Activated naive CD4-positive, alpha-beta T cell treated with anti-CD3 and anti-CD28 coated beads for 36 hours (primary cell): ENCODE measurements at regions of chr3 and their contacts with region 1.

Region 1: DNA sequence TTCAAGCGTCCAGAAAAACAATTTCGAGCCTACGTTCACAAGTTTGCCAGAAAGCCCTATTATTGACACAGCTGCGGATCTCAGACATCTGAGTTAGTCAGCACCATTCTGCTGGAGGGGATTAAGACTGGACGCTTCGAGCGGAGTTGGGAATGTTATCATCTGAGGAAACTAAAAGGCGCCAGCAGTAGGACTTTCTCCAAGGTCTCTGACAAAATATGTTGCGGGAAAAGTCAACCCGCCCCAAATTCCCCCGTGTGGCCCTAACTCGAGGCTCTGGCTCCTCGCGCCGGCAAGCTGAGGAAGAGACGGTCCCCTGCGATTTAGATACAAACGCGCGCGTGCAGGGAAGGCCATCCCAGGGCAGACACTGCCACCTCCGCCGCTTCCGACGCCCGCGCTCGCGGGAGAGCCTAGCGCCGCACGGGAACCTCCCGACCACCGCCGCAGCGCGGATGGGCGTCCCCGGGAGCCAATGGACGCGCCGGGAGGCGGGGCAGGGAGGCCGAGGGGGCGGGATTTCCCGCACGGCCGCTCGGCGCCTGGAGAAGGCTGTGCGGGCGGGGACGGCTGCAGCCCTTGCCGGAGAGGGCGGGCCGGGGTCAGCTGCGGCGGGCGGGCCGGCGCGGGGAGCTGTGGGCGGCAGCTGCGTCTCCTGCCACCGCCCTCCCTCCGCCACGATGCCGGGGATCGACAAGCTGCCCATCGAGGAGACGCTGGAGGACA is at the start of gene APPL1:
- DNase-seq: peak; percentile 93
- H3K4me3 Mint-ChIP-seq: peak within 1 kb of the TSS; percentile 88
- H3K27ac Mint-ChIP-seq: peak within 1 kb of the TSS; percentile 63
- H3K4me1 Mint-ChIP-seq: peaks cover 26% of the 10 kb centered on the region
- H3K27me3 Mint-ChIP-seq: no peaks in the 10 kb centered on the region
- total RNA-seq, gene APPL1: 30.8 to 35.1 TPM

Region 2: DNA sequence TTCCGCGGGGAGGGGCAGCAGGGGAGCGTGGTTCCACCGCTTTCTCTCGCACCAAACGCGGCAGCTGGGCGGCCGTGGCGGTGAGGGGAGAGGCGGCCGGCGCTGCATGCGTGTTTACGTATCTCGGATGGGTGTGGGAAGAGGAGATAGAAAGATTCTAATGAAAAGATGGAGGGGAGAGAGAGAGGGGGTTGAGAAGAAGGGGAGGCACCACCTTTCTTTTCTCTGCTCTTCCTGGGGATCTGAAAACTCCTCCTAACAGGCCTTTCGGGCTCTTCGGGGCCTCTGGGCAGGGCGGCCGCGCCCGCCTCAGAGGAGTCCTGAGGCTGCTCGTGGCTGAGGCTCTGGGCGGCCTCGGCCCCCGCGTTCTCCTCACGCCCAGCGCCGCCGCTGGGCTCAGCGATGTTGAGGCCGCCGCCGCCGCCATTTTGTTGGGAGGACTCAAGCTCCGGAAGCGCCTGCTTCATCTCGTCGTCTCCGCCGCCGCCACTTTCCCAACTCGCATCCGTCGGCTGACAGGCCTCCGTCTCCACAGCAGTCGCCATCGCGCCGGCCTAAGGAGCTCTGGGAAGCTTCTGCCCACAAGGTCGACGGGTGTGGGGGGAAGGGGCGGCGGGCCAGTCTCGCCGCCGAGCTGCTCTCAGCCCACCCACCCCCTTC is 544.8 kb before region 1 on chr3:
- CTCF ChIA-PET with region 1: no interaction called
- intact Hi-C with region 1: loop called (anchors 5 kb)
- DNase-seq: peak; percentile 80
- H3K4me3 Mint-ChIP-seq: peak overlapping the region; percentile 98
- H3K27ac Mint-ChIP-seq: peak overlapping the region; percentile 96
- H3K4me1 Mint-ChIP-seq: peaks cover 39% of the 10 kb centered on the region
- H3K27me3 Mint-ChIP-seq: no peaks in the 10 kb centered on the region

Region 3: DNA sequence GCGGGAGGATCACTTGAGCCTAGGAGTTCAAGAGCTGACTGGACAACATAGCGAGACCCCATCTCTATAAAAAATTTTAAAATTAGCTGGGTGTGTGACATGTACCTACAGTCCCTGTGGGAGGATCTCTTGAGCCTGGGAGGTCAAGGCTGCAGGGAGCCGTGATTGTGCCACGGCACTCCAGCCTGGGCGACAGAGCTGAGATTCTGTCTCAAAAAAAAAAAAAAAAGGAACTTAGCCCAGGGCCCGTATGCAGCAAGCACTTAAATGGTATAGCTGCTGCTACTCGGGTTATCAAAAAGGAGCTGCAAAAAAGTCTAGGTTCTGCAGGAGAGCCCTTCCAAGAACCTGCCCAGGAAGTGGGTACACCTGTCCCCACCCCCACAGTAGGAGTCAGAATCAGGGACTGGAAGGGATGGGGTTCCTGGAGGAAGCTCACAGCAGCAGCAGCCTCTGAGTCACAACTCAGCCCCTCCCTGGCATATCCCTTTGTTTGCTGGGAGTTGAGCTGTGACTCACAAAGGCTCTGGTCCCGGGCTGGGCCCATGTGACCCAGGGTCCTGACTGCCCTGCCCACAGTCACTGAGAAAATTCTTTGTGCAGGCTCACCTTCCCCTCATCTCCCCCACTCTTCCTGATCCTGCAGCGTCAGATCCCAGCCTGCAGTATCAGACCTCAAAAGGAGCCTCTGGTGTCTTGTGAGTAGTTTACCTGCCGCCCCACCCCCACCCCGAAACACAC is 167.1 kb before region 1 on chr3 and contains the start of gene SPATA12:
- CTCF ChIA-PET with region 1: no interaction called
- intact Hi-C with region 1: no loop called
- DNase-seq: peak; percentile 25
- H3K4me3 Mint-ChIP-seq: no peak within 1 kb of the TSS
- H3K27ac Mint-ChIP-seq: no peak within 1 kb of the TSS
- H3K4me1 Mint-ChIP-seq: no peaks in the 10 kb centered on the region
- H3K27me3 Mint-ChIP-seq: peaks cover 7% of the 10 kb centered on the region
- total RNA-seq, gene SPATA12: not detected

Region 4: DNA sequence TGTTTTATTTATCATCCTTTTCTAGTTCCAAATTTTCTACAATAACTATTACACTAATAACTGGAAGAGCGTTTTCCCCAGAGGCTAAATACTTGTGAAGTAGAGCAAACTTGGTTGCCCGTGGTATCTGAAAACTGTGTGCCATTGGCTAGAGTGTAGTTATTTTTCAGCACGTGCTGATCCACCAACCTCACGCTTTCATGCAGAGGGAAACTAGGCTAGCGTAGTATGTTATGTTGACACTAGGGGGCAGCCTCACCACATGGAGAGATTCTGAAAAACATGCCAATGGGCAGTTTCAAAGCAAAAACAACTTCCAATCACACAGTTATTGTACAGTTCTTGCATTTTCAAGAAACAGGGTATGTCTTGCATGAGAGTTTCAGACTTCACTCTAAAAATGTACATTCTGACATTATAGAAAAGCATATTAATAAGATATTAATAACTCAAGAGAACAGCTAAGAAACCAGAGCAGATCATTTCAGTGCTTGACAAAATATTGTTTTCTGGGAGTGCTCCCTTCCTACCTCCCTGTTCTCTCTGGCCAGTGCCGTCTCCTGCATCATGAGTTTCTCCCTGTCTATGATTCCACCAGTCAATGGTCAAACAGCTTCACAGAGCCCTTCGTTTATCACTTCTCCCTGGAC is 127.2 kb before region 1 on chr3:
- CTCF ChIA-PET with region 1: no interaction called
- intact Hi-C with region 1: loop called (anchors 5 kb)
- DNase-seq: peak; percentile 84
- H3K4me3 Mint-ChIP-seq: no peak overlapping the region
- H3K27ac Mint-ChIP-seq: no peak overlapping the region
- H3K4me1 Mint-ChIP-seq: no peaks in the 10 kb centered on the region
- H3K27me3 Mint-ChIP-seq: no peaks in the 10 kb centered on the region

Region 5: DNA sequence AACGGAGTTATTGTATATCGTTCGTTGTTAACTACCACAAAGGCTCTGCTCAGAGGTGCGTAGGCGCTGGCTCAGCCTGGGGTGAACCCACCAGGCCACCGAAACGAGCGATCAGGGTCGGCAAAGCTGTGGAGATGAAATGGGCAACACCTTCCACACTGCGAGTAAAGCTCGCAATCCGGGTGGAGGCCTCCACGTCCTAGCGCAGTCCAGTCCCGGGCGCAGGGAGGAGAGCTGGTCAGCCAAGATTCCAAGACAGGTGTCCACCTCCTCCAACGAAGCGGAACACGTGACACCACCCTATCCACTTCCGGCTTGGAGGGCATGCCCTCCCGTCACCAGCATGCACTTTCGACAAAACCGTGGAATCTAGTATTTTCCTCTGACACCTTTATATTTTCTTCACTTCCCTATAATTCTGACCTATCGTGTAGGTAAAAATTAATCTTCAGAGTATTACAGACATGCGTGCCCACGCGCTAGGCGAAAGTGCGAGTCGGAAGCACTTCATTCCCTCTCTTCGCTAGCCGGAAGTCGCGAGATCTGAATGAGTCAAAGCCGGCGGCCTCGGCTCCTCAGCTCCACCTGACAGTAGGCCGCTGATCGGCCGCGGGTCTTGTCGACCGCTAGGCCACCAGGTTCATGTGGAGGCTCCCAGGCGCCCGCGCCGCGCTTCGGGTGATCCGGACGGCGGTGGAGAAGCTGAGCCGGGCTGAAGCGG is 328.5 kb after region 1 on chr3 and contains the start of gene PDE12:
- CTCF ChIA-PET with region 1: interaction called, 3 read pairs
- intact Hi-C with region 1: loop called (anchors 1 kb)
- DNase-seq: peak; percentile 89
- H3K4me3 Mint-ChIP-seq: peak within 1 kb of the TSS; percentile 98
- H3K27ac Mint-ChIP-seq: peak within 1 kb of the TSS; percentile 98
- H3K4me1 Mint-ChIP-seq: peaks cover 33% of the 10 kb centered on the region
- H3K27me3 Mint-ChIP-seq: no peaks in the 10 kb centered on the region
- total RNA-seq, gene PDE12: 15.3 to 15.6 TPM

Region 6: DNA sequence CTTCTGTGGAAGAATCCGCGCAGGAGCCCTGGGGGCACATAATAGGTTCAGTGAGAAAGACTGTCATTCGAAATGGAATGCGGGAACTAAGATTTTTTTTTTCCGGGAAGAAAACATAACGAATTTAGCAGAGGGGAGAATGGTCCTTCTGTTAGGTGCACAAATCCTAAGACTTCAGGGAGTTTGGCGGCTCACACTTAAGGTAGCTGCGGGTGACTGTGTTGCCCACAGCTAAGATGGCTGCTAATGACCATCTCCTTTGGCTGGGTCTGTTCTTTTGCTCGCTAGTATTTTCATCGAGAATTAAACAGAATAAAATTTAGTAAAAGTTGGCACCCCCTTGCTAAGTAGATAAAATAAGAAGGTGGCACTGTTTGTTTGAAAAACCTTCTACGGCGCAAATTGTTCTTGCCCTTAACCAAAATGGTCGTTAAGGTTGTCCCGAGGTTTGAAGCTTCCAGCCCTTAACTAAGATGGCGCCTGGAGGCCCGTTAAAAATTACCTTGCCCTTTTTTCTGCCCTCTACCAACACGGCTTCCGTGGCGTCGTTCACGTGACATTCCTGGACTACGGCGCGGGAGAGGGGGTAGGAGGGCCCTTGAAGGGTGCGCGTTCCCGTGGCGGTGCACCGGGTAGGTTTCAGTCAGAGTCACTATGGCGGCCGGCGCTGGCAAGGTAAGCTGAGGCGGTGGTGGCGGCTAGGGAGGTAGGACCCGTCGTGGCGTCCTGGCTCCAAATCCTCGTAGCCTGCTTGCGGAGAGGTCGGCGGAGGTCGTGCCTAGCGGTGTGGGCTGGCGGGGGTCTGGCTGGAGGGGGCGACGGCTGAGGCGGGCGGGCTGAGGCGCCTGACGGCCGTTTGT is 528.5 kb after region 1 on chr3 and contains the start of gene SLMAP:
- CTCF ChIA-PET with region 1: no interaction called
- intact Hi-C with region 1: loop called (anchors 1 kb)
- DNase-seq: peak; percentile 99
- H3K4me3 Mint-ChIP-seq: peak within 1 kb of the TSS; percentile 98
- H3K27ac Mint-ChIP-seq: peak within 1 kb of the TSS; percentile 92
- H3K4me1 Mint-ChIP-seq: peaks cover 36% of the 10 kb centered on the region
- H3K27me3 Mint-ChIP-seq: no peaks in the 10 kb centered on the region
- total RNA-seq, gene SLMAP: 35.1 TPM